Activated B cell treated with CpG ODN at 0.5 μM for 24 hours (primary cell): ENCODE measurements at regions of chr17 and their contacts with region 1.

Region 1: DNA sequence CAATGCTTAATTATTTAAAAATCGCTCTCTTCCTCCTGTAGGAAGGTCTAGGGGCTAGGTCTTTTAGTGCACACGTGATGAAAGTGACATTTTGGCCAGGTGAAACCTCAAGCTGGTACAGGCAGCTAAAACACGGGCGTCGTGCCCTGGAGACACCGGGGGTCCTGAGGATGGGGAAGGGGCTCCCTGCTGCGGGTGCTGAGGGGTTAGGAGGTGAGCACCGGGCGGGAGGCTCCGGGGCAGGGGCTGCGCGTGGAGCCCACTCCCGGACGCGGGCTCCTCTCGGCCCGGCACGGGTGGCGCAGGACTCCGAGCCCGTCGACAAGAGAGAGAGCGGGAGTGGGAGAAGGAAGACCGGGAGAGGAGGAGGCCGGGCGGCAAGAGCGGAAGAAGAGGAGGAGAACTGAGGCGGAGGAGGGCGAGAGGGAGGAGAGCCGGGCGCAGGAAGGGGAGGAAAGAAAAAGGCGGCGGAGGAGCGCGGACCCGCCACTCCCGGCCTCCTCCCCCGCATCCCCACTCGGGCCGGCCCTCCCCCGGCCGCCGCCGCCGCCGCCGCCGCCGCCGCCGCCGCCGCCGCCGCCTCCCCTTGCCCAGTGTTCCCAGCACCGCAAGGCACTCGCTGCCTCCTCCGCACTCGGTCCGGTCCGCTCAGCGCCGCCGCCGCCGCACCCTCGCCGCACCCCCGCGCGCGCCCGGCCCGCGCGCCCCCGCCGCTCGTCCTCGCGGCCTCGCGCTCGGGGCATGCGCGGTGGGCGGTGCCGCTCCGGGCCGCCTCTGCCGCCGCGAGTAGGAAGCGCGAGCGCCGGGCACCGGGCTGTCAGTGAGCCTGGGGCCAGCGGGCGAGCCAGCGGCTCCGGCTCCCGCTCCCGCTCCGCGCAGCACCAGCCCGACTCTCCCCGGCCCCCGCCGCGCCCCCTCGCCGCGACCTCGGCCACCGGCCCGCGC is at the start of gene PRKCA:
- DNase-seq: peak; percentile 68
- ATAC-seq: peak; percentile 85
- H3K4me3 Mint-ChIP-seq: peak within 1 kb of the TSS; percentile 90
- H3K27ac Mint-ChIP-seq: peak within 1 kb of the TSS; percentile 42
- H3K4me1 Mint-ChIP-seq: peaks cover 11% of the 10 kb centered on the region
- H3K27me3 Mint-ChIP-seq: peaks cover 24% of the 10 kb centered on the region
- CTCF ChIP-seq: no peak
- total RNA-seq, gene PRKCA: 1.4 and 2.2 TPM in 2 replicates

Region 2: DNA sequence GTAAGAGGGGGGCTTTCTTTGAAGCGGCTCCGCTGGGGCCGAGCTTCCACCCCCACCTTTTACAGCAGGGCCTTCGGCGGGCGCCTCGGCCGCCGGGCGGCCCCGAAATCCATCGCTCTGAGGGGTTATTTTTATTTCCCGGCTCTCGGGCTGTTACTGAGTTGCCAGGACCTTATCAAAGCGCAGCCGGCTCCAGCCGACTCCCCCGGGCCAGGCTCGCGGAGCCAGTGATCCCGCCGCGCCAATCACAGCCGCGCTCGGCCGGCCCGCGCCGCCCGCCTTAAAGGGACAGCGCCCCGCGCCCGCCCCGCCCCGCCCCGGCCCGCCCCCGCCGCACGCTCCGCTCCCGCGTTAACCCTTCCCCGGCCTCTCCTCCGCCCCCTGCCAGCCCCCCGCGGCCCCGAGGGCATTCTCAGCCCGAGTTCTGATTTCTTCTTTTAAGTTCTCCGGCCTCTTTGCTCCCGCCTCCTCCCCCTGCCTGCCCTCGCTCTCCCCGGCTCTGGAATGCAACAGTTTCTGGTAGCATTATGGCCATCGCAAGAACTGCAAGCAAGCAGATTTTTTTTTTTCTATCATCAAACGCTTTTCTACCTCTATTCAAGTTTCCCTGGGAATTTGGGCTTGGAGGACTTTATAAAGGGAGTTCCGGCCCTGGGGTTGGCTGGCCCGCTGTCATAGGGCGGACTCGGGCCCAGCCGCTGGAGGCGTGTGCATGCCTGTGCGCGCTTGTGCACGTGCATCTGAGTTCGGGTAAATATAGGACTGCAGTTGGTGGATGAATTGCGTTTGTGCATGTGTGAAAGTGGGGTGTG is 740.5 kb before region 1 on chr17 and contains the start of gene AXIN2:
- CTCF ChIA-PET with region 1: no interaction called
- POLR2A ChIA-PET with region 1: no interaction called
- intact Hi-C with region 1: loop called (anchors 2 kb)
- DNase-seq: peak; percentile 64
- ATAC-seq: peak; percentile 93
- H3K4me3 Mint-ChIP-seq: peak within 1 kb of the TSS; percentile 82
- H3K27ac Mint-ChIP-seq: no peak within 1 kb of the TSS
- H3K4me1 Mint-ChIP-seq: peaks cover 12% of the 10 kb centered on the region
- H3K27me3 Mint-ChIP-seq: peaks cover 21% of the 10 kb centered on the region
- CTCF ChIP-seq: no peak
- total RNA-seq, gene AXIN2: 0.17 and 0.27 TPM in 2 replicates

Region 3: GRCh38 chr17:66260275-66260674 is 41.8 kb before region 1 on chr17:
- CTCF ChIA-PET with region 1: no interaction called
- POLR2A ChIA-PET with region 1: interaction called, 10 read pairs
- intact Hi-C with region 1: no loop called
- DNase-seq: no peak
- ATAC-seq: no peak
- H3K4me3 Mint-ChIP-seq: no peak overlapping the region
- H3K27ac Mint-ChIP-seq: no peak overlapping the region
- H3K4me1 Mint-ChIP-seq: no peaks in the 10 kb centered on the region
- H3K27me3 Mint-ChIP-seq: peaks cover 6% of the 10 kb centered on the region
- CTCF ChIP-seq: no peak

Region 4: GRCh38 chr17:66290101-66290722 is 11.9 kb before region 1 on chr17:
- CTCF ChIA-PET with region 1: no interaction called
- POLR2A ChIA-PET with region 1: no interaction called
- intact Hi-C with region 1: no loop called
- DNase-seq: no peak
- ATAC-seq: no peak
- H3K4me3 Mint-ChIP-seq: no peak overlapping the region
- H3K27ac Mint-ChIP-seq: no peak overlapping the region
- H3K4me1 Mint-ChIP-seq: no peaks in the 10 kb centered on the region
- H3K27me3 Mint-ChIP-seq: peaks cover 7% of the 10 kb centered on the region
- CTCF ChIP-seq: no peak

Region 5: DNA sequence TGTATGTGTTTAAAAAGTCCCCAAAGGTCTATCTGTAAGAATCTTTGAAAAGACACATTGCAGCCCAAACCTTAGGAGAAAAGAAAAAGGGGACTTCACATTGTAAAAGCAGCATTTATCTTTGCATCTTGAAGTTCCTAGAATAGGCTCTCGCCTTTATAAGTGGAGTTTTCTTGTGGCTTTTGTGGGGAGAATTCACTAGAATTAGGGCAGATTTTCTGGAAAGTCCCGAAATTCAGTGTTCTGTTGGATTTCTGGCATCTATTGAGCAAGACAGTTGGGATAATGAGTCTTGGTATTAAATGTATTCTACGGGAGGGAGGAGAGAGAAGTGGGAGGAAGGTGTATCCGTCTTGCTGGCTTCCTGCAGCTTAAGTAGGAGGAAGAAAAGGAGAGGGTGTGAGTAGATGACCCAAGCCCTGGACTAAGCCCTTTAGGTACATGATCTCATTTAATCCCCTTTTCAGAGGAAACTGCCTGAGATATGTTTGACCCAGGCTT is 63.0 kb after region 1 on chr17:
- CTCF ChIA-PET with region 1: no interaction called
- POLR2A ChIA-PET with region 1: no interaction called
- intact Hi-C with region 1: no loop called
- DNase-seq: no peak
- ATAC-seq: no peak
- H3K4me3 Mint-ChIP-seq: no peak overlapping the region
- H3K27ac Mint-ChIP-seq: no peak overlapping the region
- H3K4me1 Mint-ChIP-seq: no peaks in the 10 kb centered on the region
- H3K27me3 Mint-ChIP-seq: peaks cover 3% of the 10 kb centered on the region
- CTCF ChIP-seq: no peak